HEK293 (cell line): ENCODE measurements at regions of chr10 and their contacts with region 1.

Region 1: DNA sequence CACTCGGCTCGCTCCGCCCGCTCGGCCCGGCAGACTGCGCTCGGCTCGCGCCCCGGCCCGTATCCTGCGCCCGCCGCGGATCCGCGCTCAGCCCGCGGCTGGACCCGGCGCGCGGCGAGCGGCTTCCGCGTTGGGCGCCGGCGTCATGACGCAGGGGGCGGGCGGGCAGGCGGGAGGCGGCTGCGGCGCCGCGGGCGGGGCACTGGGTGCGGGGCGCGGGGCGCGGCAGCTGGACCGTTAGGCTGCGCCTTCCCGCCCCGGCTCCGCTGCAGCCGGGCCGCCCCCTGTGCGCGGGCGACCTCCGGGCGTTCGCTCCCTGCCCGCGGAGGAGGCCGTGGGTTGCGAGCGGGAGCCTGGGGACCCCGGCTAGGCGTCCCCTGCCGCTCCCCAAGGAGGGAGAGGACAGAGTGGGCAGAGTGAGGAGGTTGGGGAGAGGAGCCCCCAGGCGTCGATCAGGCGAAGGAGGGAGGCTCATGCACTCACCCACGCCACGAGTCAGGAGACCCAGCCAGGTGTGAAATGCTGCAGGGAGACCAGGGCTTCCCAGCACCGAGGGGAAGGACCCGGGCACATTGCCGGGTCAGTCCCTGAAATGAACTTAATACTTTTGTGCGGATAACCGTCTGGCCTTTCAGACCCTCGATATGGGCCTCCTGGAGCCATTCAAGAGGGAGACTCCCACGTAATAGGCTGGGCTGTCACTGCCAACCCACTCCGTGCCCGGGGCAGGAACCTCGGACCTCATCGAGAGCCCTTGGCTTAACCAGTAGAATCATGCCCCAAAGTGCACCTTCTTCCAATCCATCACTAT is at the start of gene PIP4K2A:
- H3K4me3 ChIP-seq: peak within 1 kb of the TSS; percentile 83
- H3K27ac ChIP-seq: peak within 1 kb of the TSS; percentile 86
- H3K4me1 ChIP-seq: peaks cover 15% of the 10 kb centered on the region
- CTCF ChIP-seq: no peak

Region 2: GRCh38 chr10:22724773-22725172 is 10.1 kb after region 1 on chr10:
- CTCF ChIA-PET with region 1: interaction called, 10 read pairs
- POLR2A ChIA-PET with region 1: no interaction called
- H3K4me3 ChIP-seq: no peak overlapping the region
- H3K27ac ChIP-seq: no peak overlapping the region
- H3K4me1 ChIP-seq: no peaks in the 10 kb centered on the region
- CTCF ChIP-seq: no peak